IMR-90 (cell line): ENCODE measurements at regions of chr13 and their contacts with region 1.

Region 1: GRCh38 chr13:103883164-103883563 is 816.9 kb upstream of the SLC10A2 start:
- DNase-seq: peak; percentile 95
- ATAC-seq: peak; percentile 99
- H3K4me3 ChIP-seq: no peak overlapping the region
- H3K27ac ChIP-seq: no peak overlapping the region
- H3K4me1 ChIP-seq: peaks cover 2% of the 10 kb centered on the region; the same call in 1 of the 2 replicates
- H3K27me3 ChIP-seq: no peaks in the 10 kb centered on the region
- CTCF ChIP-seq: peak; percentile 81
- POLR2A ChIP-seq: no peak
- RAD21 ChIP-seq: peak; percentile 93

Region 2: DNA sequence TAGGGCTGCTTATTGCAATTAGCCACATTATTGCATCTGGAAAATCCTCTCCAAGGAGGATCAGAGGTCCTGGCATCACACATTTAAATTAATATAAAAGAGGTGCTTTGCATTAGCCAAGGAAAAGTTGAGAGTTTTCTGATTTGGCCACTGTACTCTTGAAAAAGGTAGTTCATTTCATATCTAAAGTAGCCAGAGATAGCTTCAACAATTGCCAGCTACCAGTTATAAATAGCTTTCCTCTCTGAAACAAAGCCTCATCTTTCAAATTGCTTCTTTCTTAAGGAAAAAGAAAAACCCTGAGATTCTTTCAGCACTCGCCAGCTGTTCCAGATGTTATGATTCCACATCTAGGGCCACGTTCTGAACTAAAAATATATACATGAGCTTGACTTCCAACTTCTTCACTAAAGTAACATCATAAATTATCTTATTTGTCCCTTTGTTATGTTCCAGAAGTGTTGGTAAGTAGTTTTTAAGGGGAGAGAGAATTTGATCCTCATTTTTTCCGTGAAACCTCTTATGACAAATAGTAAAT is 967.7 kb before region 1 on chr13:
- CTCF ChIA-PET with region 1: no interaction called
- POLR2A ChIA-PET with region 1: no interaction called
- dilution Hi-C with region 1: no loop called
- in situ Hi-C with region 1: no loop called
- intact Hi-C with region 1: loop called (anchors 5 kb)
- DNase-seq: no peak
- ATAC-seq: no peak
- H3K4me3 ChIP-seq: no peak overlapping the region
- H3K27ac ChIP-seq: no peak overlapping the region
- H3K4me1 ChIP-seq: no peaks in the 10 kb centered on the region
- H3K27me3 ChIP-seq: peaks cover 7% of the 10 kb centered on the region
- CTCF ChIP-seq: no peak
- POLR2A ChIP-seq: no peak
- RAD21 ChIP-seq: no peak

Region 3: DNA sequence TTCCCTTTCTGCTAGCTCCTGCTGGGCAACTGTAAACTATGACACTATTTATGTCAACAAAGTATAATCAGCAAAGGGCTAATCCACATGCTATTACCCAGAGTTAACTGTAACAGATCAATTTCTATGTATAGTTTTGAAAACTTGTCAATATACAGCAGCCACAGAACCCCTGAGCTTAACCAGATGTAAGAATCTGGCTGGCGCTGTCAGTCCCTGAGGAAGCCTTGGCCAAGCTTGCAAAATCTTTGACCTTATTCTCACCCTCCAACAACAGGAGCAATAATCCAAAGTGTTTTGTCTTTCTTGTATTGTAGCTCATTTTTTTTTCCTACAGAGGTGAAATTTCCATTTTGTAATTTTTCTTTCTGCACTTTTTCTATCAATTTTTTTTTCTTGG is 413.1 kb after region 1 on chr13:
- CTCF ChIA-PET with region 1: no interaction called
- POLR2A ChIA-PET with region 1: no interaction called
- dilution Hi-C with region 1: no loop called
- in situ Hi-C with region 1: no loop called
- intact Hi-C with region 1: loop called (anchors 5 kb)
- DNase-seq: no peak
- ATAC-seq: no peak
- H3K4me3 ChIP-seq: no peak overlapping the region
- H3K27ac ChIP-seq: no peak overlapping the region
- H3K4me1 ChIP-seq: peaks cover 2% of the 10 kb centered on the region; the same call in 1 of the 2 replicates
- H3K27me3 ChIP-seq: no peaks in the 10 kb centered on the region
- CTCF ChIP-seq: no peak
- POLR2A ChIP-seq: no peak
- RAD21 ChIP-seq: no peak

Region 4: GRCh38 chr13:104318121-104318520 is 435.0 kb after region 1 on chr13:
- CTCF ChIA-PET with region 1: no interaction called
- POLR2A ChIA-PET with region 1: no interaction called
- dilution Hi-C with region 1: no loop called
- in situ Hi-C with region 1: no loop called
- intact Hi-C with region 1: loop called (anchors 1 kb)
- DNase-seq: peak; percentile 49
- ATAC-seq: peak; percentile 66
- H3K4me3 ChIP-seq: no peak overlapping the region
- H3K27ac ChIP-seq: no peak overlapping the region
- H3K4me1 ChIP-seq: peaks cover 2% of the 10 kb centered on the region; the same call in 1 of the 2 replicates
- H3K27me3 ChIP-seq: no peaks in the 10 kb centered on the region
- CTCF ChIP-seq: peak; percentile 58
- POLR2A ChIP-seq: no peak
- RAD21 ChIP-seq: peak; percentile 63

Region 5: DNA sequence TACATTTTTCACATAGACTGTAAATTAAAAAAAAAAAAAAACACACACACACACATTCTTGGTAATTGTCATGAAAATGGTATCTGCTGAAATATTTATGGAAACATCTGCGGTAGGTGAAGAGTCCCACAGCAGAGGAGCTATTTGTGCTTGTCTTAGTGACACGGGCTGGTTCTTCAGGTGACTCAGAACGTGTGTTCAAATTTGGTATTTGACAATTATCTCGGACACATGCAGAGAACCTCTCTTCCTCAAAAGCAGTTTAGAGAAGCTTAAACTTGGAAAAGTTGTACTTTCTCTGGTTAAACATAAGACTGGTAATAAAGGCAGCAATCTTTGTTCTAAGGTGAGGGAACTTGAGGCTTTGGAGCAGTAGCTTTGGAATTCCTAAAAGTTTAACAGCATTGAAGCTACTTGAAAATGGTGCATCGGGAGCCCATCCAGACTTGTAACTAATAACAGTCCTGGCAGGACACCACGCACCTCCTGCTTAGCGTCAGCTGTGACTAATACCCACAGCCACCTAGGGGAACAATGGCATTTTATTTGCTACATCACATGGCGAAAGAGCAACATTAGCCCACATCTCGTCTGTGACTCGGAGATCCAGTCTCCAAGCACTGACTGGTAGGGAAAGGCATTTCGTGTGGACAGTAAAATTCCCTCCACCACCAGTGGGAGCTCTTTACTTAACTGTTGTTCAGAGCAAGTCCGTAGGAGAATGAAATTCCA is 688.2 kb after region 1 on chr13:
- CTCF ChIA-PET with region 1: no interaction called
- POLR2A ChIA-PET with region 1: no interaction called
- dilution Hi-C with region 1: no loop called
- in situ Hi-C with region 1: loop called (anchors 25 kb)
- intact Hi-C with region 1: loop called (anchors 1 kb)
- DNase-seq: peak; percentile 82
- ATAC-seq: peak; percentile 99
- H3K4me3 ChIP-seq: no peak overlapping the region
- H3K27ac ChIP-seq: no peak overlapping the region
- H3K4me1 ChIP-seq: peaks cover 1% of the 10 kb centered on the region; the same call in 1 of the 2 replicates
- H3K27me3 ChIP-seq: no peaks in the 10 kb centered on the region
- CTCF ChIP-seq: peak; percentile 73
- POLR2A ChIP-seq: no peak
- RAD21 ChIP-seq: peak; percentile 76

Region 6: GRCh38 chr13:104773775-104774174 is 890.6 kb after region 1 on chr13:
- CTCF ChIA-PET with region 1: no interaction called
- POLR2A ChIA-PET with region 1: no interaction called
- dilution Hi-C with region 1: no loop called
- in situ Hi-C with region 1: no loop called
- intact Hi-C with region 1: loop called (anchors 1 kb)
- DNase-seq: peak; percentile 54
- ATAC-seq: peak; percentile 80; the same call in 1 of the 2 replicates
- H3K4me3 ChIP-seq: no peak overlapping the region
- H3K27ac ChIP-seq: no peak overlapping the region
- H3K4me1 ChIP-seq: no peaks in the 10 kb centered on the region
- H3K27me3 ChIP-seq: no peaks in the 10 kb centered on the region
- CTCF ChIP-seq: peak; percentile 63
- POLR2A ChIP-seq: no peak
- RAD21 ChIP-seq: peak; percentile 64